GM18951 (cell line): ENCODE measurements at regions of chr6 and their contacts with region 1.

Region 1: GRCh38 chr6:132298344-132298949 is 102.8 kb downstream of the MOXD1 start:
- POLR2A ChIP-seq: no peak

Region 2: GRCh38 chr6:132483779-132484679 is 185.6 kb after region 1 on chr6:
- in situ Hi-C with region 1: loop called (anchors 10 kb)
- POLR2A ChIP-seq: no peak

Region 3: DNA sequence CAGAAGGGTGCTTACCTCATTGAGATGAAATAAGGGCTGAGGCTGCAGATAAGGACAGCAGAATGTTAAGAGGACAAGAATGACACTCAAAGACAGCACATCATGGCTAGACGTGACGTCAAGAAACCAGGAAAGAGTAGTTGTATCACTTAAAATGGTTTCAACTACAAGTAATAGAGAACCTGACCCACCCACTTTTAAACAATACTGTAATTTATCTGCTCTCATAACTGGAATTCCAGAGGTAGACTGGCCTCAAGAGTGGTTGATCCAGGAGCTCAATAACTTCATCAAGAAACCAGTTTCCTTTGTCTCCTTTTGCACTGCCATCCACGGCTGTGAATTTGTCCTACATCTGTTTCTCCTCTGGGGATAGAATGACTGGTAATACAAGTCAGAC is 1129.9 kb after region 1 on chr6:
- in situ Hi-C with region 1: no loop called
- POLR2A ChIP-seq: no peak